OCI-LY7 (cell line): ENCODE measurements at regions of chr2 and their contacts with region 1.

Region 1: DNA sequence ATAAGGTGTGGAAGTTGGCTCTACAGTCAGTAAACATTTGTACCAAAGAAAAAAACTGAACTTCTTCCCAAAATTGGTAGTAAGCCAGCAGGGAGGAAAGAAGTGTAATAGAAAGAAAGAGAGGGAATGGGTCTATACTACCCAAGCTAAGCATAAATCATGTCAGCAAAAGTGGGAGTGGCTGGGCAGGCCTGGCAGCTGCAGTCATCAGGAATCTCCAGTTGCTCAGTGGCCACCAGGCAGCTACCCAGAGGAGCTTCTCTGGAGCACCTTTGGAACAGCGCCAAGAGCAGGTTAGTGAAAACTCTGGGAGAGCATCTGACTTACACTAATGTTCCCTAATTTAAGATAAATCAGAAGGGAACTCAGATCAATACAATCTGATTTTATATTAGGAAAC is 14.4 kb downstream of the FRZB start:
- DNase-seq: no peak
- H3K4me3 ChIP-seq: no peak overlapping the region
- H3K27ac ChIP-seq: no peak overlapping the region
- H3K4me1 ChIP-seq: peaks cover 19% of the 10 kb centered on the region
- CTCF ChIP-seq: no peak

Region 2: DNA sequence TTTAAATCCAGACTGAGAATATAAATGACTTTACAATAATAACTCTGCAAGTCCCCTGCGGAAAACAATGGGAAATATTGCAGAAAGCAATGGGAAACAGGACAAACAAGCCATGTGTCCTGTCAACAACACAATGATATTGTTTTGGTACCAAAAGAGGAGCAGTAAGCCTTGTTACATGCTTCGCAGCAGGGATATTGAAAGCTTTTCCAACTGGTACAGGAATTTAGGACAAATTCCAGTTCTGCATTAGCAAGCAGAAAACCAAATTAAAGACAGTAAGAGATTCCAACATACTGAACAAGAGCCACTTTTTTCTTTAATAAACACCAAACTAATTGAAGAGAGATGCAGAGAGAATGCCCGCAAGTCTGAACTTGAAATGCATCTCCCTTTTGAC is 15.6 kb before region 1 on chr2:
- CTCF ChIA-PET with region 1: no interaction called
- POLR2A ChIA-PET with region 1: interaction called, 10 read pairs
- intact Hi-C with region 1: no loop called
- DNase-seq: no peak
- H3K4me3 ChIP-seq: no peak overlapping the region
- H3K27ac ChIP-seq: no peak overlapping the region
- H3K4me1 ChIP-seq: peaks cover 21% of the 10 kb centered on the region
- CTCF ChIP-seq: no peak